ENCODE measurements at regions of chr12 and their contacts with region 1.

Region 1: DNA sequence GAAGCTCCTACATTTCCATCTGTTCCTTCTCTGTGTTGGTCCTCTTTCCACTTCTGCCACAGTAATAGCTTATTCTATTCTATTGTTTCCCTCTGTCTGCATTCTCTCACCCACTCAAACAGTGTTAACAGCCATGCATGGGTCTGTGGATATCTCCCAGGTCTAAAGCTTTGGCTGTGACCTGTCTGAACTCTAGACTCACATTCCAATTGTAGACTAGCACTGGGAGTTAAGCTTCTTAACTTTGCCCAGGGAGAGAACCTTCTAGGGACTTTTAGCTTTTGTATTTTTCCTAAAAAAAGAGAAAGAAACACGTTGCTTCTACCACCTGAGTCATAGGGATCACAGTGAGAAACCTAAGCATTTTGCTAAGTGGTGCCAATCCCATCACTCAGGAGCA is 36.7 kb downstream of the PTPRR start:
- DNase-seq: no peak
- H3K4me3 ChIP-seq: no peak overlapping the region
- H3K27ac ChIP-seq: no peak overlapping the region
- H3K4me1 ChIP-seq: no peaks in the 10 kb centered on the region
- H3K27me3 ChIP-seq: no peaks in the 10 kb centered on the region
- CTCF ChIP-seq: no peak

Region 2: DNA sequence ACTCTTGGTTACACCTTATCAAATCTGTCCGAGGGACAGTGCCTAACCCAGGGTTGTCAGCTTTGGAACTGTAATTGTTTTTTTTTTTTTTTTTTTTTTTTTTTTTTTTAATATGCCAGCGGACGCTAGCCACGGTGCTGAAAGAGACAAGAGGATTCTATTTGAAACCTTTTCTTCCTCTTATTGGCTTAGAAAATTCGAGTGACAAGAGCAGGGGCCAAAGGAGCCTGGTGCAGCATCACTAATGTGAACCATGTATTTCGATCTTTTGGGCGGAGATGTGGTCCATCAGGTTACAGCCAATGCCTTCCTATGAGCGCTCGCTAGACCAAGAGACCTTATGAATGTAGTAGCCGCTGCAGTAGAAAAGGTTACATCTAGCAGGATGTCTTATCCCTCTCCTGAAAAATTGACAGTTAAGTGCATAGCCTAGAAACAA is 35.8 kb after region 1 on chr12:
- CTCF ChIA-PET with region 1: no interaction called
- dilution Hi-C with region 1: loop called (anchors 5 kb)
- in situ Hi-C with region 1: no loop called
- intact Hi-C with region 1: no loop called
- DNase-seq: no peak
- H3K4me3 ChIP-seq: no peak overlapping the region
- H3K27ac ChIP-seq: no peak overlapping the region
- H3K4me1 ChIP-seq: no peaks in the 10 kb centered on the region
- H3K27me3 ChIP-seq: peaks cover 9% of the 10 kb centered on the region
- CTCF ChIP-seq: no peak

Measured in mammary epithelial cell (primary cell).